ENCODE measurements at regions of chr1 and their contacts with region 1.

Region 1: DNA sequence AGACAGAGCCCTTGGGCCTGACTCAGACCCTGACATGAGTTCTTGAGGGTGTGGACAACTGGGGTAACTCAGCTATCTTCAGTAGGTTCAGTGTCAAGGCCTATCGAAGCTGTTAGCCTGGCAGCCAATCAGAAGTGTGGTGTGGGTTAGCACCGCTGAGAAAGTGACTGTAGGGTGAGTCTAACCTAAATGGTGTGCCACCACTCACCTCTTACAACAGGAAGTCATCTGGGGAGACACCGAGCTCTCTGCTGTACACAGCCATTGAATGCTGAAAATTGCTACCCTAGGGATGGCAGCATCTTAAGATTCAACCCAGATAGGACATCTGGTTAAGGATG is 44.6 kb downstream of the RASSF5 start:
- DNase-seq: no peak
- H3K4me3 ChIP-seq: no peak overlapping the region
- H3K27ac ChIP-seq: no peak overlapping the region
- H3K4me1 ChIP-seq: peaks cover 9 to 47% of the 10 kb centered on the region in 2 donors
- H3K27me3 ChIP-seq: no peaks in the 10 kb centered on the region
- CTCF ChIP-seq: no peak
- POLR2A ChIP-seq: no peak

Region 2: GRCh38 chr1:206575894-206576737 is 24.2 kb after region 1 on chr1:
- intact Hi-C with region 1: loop called (anchors 2 kb)
- DNase-seq: no peak
- H3K4me3 ChIP-seq: no peak overlapping the region
- H3K27ac ChIP-seq: peak overlapping the region in 1 of 3 donors; percentile 17
- H3K4me1 ChIP-seq: peaks cover 17 to 18% of the 10 kb centered on the region in 2 donors
- H3K27me3 ChIP-seq: no peaks in the 10 kb centered on the region
- CTCF ChIP-seq: no peak
- POLR2A ChIP-seq: no peak

Region 3: DNA sequence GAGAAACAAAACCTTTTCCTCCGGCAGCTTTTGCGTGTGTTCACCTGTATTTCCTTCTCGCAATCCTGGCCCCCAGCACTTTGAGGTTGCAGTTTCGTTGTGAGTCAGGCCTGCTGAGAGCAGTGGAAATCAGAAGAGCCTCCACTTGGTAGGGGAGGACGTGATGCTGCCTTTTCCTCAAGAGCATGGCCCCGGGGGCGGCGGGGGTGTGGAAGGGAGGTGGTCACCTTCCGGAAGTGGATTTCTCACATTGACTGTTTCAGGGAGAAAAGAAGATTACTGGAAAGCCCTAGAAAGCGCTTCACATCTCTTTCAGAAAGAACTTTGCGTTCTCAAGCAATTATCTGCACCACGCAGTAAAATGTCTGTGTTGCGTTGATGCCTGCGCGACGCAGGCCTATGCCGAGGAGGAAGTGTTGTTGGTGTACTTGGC is 232.5 kb after region 1 on chr1:
- intact Hi-C with region 1: no loop called
- DNase-seq: no peak
- H3K4me3 ChIP-seq: no peak overlapping the region
- H3K27ac ChIP-seq: no peak overlapping the region
- H3K4me1 ChIP-seq: no peaks in the 10 kb centered on the region
- H3K27me3 ChIP-seq: no peaks in the 10 kb centered on the region
- CTCF ChIP-seq: no peak
- POLR2A ChIP-seq: no peak